GM10248 (cell line): ENCODE measurements at regions of chr16 and their contacts with region 1.

Region 1: GRCh38 chr16:56005958-56006357 is 130.8 kb upstream of the CES5A start:
- DNase-seq: no peak
- CTCF ChIP-seq: no peak

Region 2: GRCh38 chr16:55991843-55992242 is 14.1 kb before region 1 on chr16:
- CTCF ChIA-PET with region 1: interaction called, 10 read pairs
- POLR2A ChIA-PET with region 1: no interaction called
- DNase-seq: no peak
- CTCF ChIP-seq: no peak